ENCODE measurements at regions of chr6 and their contacts with region 1.

Region 1: DNA sequence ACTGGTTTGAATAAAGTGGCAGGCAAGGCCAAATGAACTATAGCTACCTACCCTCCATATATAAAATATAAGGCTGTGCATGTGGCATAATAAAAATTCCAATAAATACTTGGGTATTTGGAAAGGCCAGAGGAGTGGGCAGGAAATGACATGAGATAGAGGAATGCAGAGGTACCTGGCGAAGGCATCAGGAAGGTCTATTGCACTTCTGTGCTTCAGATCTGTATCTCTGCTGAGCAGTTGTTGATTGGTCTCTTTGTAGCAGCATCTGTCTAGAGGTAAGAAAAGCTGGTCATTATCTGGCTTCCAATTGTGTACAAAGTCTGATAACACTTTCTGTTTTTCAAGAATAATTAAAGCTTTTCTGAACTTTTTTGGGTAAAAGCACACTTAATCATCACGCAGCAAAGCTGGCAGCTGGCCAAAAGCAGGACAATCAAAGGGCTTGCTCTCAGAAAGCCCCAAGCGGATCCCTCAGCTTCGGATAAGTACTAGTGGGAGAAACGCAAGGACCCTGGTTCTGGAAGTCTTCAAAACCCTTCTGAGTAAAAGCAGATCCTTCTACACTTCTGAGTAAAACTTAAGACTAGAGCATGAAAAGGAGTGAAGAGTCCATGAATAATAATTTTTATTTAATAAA is 120.1 kb upstream of the TCF21 start:
- DNase-seq: peak; percentile 74
- H3K4me3 ChIP-seq: no peak overlapping the region
- H3K27ac ChIP-seq: no peak overlapping the region
- H3K4me1 ChIP-seq: peaks cover 0 to 10% (median 1%) of the 10 kb centered on the region in 4 donors
- H3K27me3 ChIP-seq: no peaks in the 10 kb centered on the region
- CTCF ChIP-seq: no peak
- EP300 ChIP-seq: no peak
- POLR2A ChIP-seq: no peak

Region 2: GRCh38 chr6:133889557-133890403 is 121.0 kb after region 1 on chr6:
- intact Hi-C with region 1: loop called (anchors 10 kb)
- DNase-seq: no peak
- H3K4me3 ChIP-seq: peak overlapping the region; percentile 38 to 52 (median 44)
- H3K27ac ChIP-seq: peak overlapping the region; percentile 75 to 93 (median 82)
- H3K4me1 ChIP-seq: peaks cover 0 to 38% (median 22%) of the 10 kb centered on the region in 4 donors
- H3K27me3 ChIP-seq: peaks cover 38 to 72% (median 63%) of the 10 kb centered on the region in 3 donors
- CTCF ChIP-seq: no peak
- EP300 ChIP-seq: no peak
- POLR2A ChIP-seq: no peak

Measured in sigmoid colon (tissue), 7 donors.